ENCODE measurements at regions of chr13 and their contacts with region 1.

Region 1: DNA sequence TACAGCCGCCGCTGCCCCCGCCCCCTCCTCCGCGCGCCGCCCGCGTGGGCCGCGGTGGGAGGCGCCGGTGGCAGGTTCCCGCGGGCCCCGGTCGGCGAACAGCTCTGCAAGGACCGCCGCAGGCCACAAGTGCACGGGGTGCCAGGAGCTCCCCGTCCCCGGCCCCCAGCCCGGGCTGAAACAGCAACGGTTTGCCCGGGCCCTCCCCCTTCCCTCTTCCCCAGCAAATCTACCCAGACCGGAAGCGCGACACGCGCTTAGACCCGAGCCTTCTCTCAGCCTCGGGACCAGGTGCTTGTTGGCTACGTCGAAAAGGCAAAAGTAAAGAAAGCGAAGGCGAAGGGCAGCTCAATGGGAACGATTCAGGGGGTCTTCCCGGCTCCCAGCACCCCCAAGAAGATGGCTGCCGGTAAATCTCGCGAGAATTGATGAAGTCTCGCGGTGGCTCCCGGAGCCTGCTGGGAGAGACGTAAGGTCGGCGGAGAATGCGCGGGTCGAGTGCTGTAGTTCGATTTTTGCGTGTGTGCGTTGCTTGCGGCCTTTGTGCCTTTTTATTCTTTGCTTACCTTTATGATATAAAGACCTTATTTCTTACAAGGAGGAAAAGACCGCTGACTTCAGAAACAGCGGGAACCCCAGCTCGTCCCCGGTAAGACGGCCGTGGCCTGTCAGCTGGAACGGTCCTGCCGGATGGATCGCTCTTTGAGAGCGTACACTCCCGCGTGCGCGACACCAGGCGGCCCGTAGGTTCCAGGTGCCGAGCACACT is at the start of gene RBM26:
- DNase-seq: peak; percentile 97
- ATAC-seq: peak; percentile 88
- H3K4me3 Mint-ChIP-seq: no peak within 1 kb of the TSS
- H3K27ac Mint-ChIP-seq: peak within 1 kb of the TSS; percentile 96
- H3K4me1 Mint-ChIP-seq: peaks cover 40% of the 10 kb centered on the region
- H3K27me3 Mint-ChIP-seq: no peaks in the 10 kb centered on the region
- total RNA-seq, gene RBM26: 65.2 to 66.0 TPM

Region 2: GRCh38 chr13:79393564-79394249 is 12.3 kb before region 1 on chr13:
- CTCF ChIA-PET with region 1: interaction called, 13 read pairs
- DNase-seq: peak; percentile 62
- ATAC-seq: peak; percentile 52
- H3K4me3 Mint-ChIP-seq: peak overlapping the region; percentile 38
- H3K27ac Mint-ChIP-seq: peak overlapping the region; percentile 67
- H3K4me1 Mint-ChIP-seq: peaks cover 55% of the 10 kb centered on the region
- H3K27me3 Mint-ChIP-seq: no peaks in the 10 kb centered on the region